ENCODE measurements at regions of chr11 and their contacts with region 1.

Region 1: GRCh38 chr11:76670485-76671236 is at the start of gene LRRC32:
- DNase-seq: peak in 1 of 2 donors; percentile 64
- ATAC-seq: peak; percentile 63
- total RNA-seq, gene LRRC32: 12.5 to 15.6 TPM

Region 2: DNA sequence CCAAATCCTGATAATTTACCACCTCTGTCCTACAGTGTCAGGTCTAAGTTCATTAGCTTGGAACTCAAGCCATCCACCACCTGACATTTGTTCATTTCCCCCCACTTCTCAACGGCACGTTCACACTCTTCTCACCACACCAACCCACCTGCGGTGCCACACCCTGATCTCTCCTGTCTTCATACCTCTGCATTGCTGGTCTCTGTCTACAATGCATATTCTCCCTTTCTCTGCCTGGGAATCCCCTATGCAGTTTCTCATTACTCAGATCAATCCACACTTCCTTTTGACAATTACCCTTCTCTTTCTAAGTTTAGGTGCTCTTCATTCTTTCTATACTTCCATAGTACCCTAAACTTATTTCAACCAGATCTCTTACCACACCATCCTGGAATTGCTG is 246.3 kb before region 1 on chr11:
- intact Hi-C with region 1: no loop called
- DNase-seq: no peak
- ATAC-seq: no peak

Region 3: GRCh38 chr11:76577199-76577920 is 93.3 kb before region 1 on chr11:
- intact Hi-C with region 1: loop called in 1 of 2 experiments (anchors 10 kb)
- DNase-seq: peak; percentile 59 to 76
- ATAC-seq: peak; percentile 93